ENCODE measurements at regions of chr6 and their contacts with region 1.

Region 1: DNA sequence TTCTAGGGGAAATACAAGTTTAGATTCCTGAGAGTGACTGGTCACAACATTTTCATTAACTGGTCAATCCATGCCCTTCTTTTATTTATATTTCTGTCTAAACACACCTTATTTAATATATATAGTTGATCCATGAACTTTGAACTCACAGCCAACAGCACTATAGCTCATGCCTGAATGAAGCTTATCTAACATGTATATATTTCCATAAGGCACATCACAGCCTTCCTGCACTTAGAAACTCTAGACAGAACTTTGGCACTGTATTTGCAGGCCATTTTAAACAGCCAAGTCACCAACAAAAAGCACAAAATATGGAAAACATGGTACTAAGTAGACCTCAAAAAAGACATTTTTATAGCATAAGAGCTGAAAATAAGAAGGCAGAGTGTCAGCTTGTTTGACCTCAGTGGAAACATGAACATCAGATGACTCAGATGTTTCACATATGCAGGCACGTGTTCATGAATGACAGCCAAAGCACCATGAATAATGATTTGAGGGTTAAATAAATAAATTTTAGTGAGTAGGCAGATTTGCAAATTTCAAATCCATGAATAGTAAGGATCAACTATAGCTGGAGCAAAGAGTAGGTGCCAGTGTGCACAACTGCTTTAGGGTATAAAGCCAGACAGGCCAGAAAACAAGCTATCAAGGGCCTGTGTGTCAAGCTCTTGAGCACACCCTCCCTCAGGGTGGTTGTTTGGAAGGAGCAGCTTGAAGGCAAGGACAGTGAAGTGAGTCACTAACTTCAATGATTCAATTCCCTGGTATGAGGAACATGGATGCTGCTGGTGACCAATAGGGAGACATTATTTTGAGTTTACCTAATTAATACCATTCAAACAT is 88.9 kb upstream of the NT5E start:
- DNase-seq: peak; percentile 72
- H3K4me3 Mint-ChIP-seq: no peak overlapping the region
- H3K27ac Mint-ChIP-seq: peak overlapping the region; percentile 89
- H3K4me1 Mint-ChIP-seq: peaks cover 47% of the 10 kb centered on the region
- H3K27me3 Mint-ChIP-seq: no peaks in the 10 kb centered on the region
- CTCF ChIP-seq: no peak

Region 2: DNA sequence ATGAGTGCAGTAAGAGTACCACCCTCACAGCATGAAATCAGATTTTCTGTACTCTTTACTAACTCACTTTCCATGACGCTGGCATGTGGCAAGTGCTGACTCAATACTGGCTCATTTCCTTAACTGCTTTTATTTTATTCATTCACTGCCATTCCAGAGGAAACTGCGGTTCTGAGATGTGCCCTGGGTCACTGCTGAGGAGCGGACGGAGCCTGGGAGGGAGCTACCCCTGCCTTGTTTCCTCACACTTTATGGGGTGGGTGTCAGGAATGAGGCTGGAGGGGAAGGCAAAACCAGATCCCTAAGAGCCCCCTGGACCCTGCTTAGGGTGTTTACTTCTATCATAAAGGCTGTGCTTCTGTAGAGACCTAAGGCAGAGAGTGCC is 103.2 kb after region 1 on chr6:
- CTCF ChIA-PET with region 1: interaction called, 7 read pairs
- intact Hi-C with region 1: loop called (anchors 2 kb)
- DNase-seq: peak; percentile 67
- H3K4me3 Mint-ChIP-seq: peak overlapping the region; percentile 20
- H3K27ac Mint-ChIP-seq: peak overlapping the region; percentile 87
- H3K4me1 Mint-ChIP-seq: peaks cover 76% of the 10 kb centered on the region
- H3K27me3 Mint-ChIP-seq: no peaks in the 10 kb centered on the region
- CTCF ChIP-seq: no peak